Natural killer cell (primary cell): ENCODE measurements at regions of chr1 and their contacts with region 1.

Region 1: GRCh38 chr1:6646499-6647148 is 22.0 kb downstream of the THAP3 start:
- DNase-seq: peak in 1 of 2 donors; percentile 70
- ATAC-seq: peak; percentile 59 to 80 (median 75)
- H3K4me3 ChIP-seq: no peak overlapping the region
- H3K4me3 Mint-ChIP-seq: no peak overlapping the region
- H3K27ac ChIP-seq: no peak overlapping the region
- H3K27ac Mint-ChIP-seq: no peak overlapping the region
- H3K4me1 ChIP-seq: no peaks in the 10 kb centered on the region
- H3K4me1 Mint-ChIP-seq: no peaks in the 10 kb centered on the region
- H3K27me3 ChIP-seq: no peaks in the 10 kb centered on the region
- H3K27me3 Mint-ChIP-seq: no peaks in the 10 kb centered on the region
- CTCF ChIP-seq: peak; percentile 59

Region 2: DNA sequence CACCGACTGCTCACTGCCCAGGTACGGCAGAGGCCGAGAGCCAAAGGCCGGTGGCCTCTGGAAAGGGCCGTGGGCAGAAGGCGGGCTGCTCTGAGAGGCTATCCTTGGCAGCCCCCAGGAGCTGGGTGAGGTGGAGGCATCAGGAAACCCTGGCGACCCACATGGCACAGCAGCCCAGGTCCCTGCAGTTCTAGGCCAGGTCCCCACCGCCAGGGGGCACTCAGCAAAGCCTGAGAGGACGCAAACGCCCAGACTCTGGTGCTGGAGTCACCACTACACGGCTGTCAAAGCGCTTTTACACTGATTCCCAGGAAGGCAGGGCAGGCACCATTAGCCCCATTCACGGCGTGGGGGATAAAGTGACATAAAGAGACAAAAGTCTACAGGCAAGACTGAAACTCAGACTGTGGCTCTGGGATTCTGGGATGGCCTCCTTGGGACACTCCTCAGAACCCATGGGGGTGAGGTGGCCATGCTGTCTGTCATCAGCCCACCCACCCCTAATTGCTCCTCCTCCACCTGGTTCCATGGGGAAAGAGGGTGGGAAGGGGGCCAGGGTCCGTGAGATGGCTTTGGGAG is 160.1 kb before region 1 on chr1:
- intact Hi-C with region 1: loop called (anchors 1 kb)
- DNase-seq: peak; percentile 74 to 92
- ATAC-seq: peak; percentile 73 to 82 (median 79)
- H3K4me3 ChIP-seq: no peak overlapping the region
- H3K4me3 Mint-ChIP-seq: no peak overlapping the region
- H3K27ac ChIP-seq: no peak overlapping the region
- H3K27ac Mint-ChIP-seq: no peak overlapping the region
- H3K4me1 ChIP-seq: peaks cover 29% of the 10 kb centered on the region
- H3K4me1 Mint-ChIP-seq: peaks cover 3 to 25% of the 10 kb centered on the region in 2 donors
- H3K27me3 ChIP-seq: peaks cover 29% of the 10 kb centered on the region
- H3K27me3 Mint-ChIP-seq: peaks cover 25 to 32% of the 10 kb centered on the region in 2 donors
- CTCF ChIP-seq: peak; percentile 75

Region 3: GRCh38 chr1:6554031-6554906 is 92.4 kb before region 1 on chr1 and contains the start of gene NOL9:
- intact Hi-C with region 1: loop called (anchors 1 kb)
- DNase-seq: peak; percentile 94 to 97
- ATAC-seq: peak; percentile 99 to 100 (median 99)
- H3K4me3 ChIP-seq: peak within 1 kb of the TSS; percentile 69
- H3K4me3 Mint-ChIP-seq: peak within 1 kb of the TSS; percentile 85
- H3K27ac ChIP-seq: peak within 1 kb of the TSS; percentile 22
- H3K27ac Mint-ChIP-seq: peak within 1 kb of the TSS in 1 of 2 donors; percentile 67
- H3K4me1 ChIP-seq: peaks cover 20% of the 10 kb centered on the region
- H3K4me1 Mint-ChIP-seq: peaks cover 7 to 11% of the 10 kb centered on the region in 2 donors
- H3K27me3 ChIP-seq: no peaks in the 10 kb centered on the region
- H3K27me3 Mint-ChIP-seq: no peaks in the 10 kb centered on the region
- CTCF ChIP-seq: peak; percentile 97
- total RNA-seq, gene NOL9: 40.7 to 53.3 (median 52.0) TPM